T-cell (primary cell): ENCODE measurements at regions of chr5 and their contacts with region 1.

Region 1: DNA sequence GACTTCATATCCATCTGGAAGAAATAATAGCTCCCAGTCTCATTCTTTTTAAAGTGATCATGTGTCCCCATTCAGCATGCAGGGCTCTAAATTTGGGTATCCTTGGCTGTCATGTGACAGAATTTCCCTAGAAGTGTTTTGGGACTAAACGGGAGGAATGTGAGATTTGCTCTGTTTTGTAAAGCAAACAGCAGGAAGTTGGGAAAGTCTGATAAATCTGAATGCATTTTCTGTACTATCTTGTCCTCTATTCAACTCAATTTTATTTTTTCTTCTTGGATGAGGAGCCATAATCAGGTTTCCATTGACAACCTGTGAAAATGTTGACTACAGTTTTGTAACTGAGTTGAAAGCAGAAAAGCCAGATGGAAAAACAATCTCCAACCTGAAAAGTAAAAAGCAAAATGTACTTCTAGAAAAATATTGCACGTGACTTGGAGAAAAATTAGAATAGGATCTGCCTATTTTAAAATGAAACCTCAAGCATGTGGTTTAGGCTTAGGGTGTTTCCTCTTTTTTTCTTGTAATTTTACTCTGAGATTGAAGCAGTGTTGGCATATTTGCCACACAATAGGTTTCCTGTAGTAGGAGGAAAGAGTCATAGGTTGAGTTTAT is 76.2 kb upstream of the IL6ST start:
- DNase-seq: peak in 1 of 35 experiments; percentile 53
- ATAC-seq: peak; percentile 87 to 91 (median 90)
- H3K4me3 ChIP-seq: peak overlapping the region in 1 of 2 donors; percentile 15
- H3K4me3 Mint-ChIP-seq: peak overlapping the region; percentile 32 to 76 (median 56)
- H3K27ac ChIP-seq: peak overlapping the region; percentile 61
- H3K27ac Mint-ChIP-seq: peak overlapping the region; percentile 98
- H3K4me1 ChIP-seq: peaks cover 44 to 54% of the 10 kb centered on the region in 2 experiments
- H3K4me1 Mint-ChIP-seq: peaks cover 75 to 87% (median 79%) of the 10 kb centered on the region in 3 donors
- H3K27me3 ChIP-seq: no peaks in the 10 kb centered on the region
- H3K27me3 Mint-ChIP-seq: no peaks in the 10 kb centered on the region

Region 2: GRCh38 chr5:55800924-55801323 is 270.0 kb before region 1 on chr5:
- CTCF ChIA-PET with region 1: no interaction called
- POLR2A ChIA-PET with region 1: no interaction called
- DNase-seq: peak in 1 of 35 experiments; percentile 19
- ATAC-seq: no peak
- H3K4me3 ChIP-seq: no peak overlapping the region
- H3K4me3 Mint-ChIP-seq: no peak overlapping the region
- H3K27ac ChIP-seq: no peak overlapping the region
- H3K27ac Mint-ChIP-seq: no peak overlapping the region
- H3K4me1 ChIP-seq: no peaks in the 10 kb centered on the region
- H3K4me1 Mint-ChIP-seq: peaks cover 0 to 2% (median 0%) of the 10 kb centered on the region in 3 donors
- H3K27me3 ChIP-seq: no peaks in the 10 kb centered on the region
- H3K27me3 Mint-ChIP-seq: no peaks in the 10 kb centered on the region

Region 3: GRCh38 chr5:55959208-55959607 is 111.8 kb before region 1 on chr5:
- CTCF ChIA-PET with region 1: interaction called in 1 of 2 experiments, 13 read pairs
- POLR2A ChIA-PET with region 1: no interaction called
- DNase-seq: peak in 1 of 35 experiments; percentile 56
- ATAC-seq: peak in 1 of 4 experiments; percentile 80
- H3K4me3 ChIP-seq: no peak overlapping the region
- H3K4me3 Mint-ChIP-seq: no peak overlapping the region
- H3K27ac ChIP-seq: no peak overlapping the region
- H3K27ac Mint-ChIP-seq: peak overlapping the region; percentile 52 to 64
- H3K4me1 ChIP-seq: no peaks in the 10 kb centered on the region
- H3K4me1 Mint-ChIP-seq: peaks cover 14 to 23% (median 21%) of the 10 kb centered on the region in 3 donors
- H3K27me3 ChIP-seq: no peaks in the 10 kb centered on the region
- H3K27me3 Mint-ChIP-seq: no peaks in the 10 kb centered on the region

Region 4: GRCh38 chr5:56012281-56012963 is 58.5 kb before region 1 on chr5:
- CTCF ChIA-PET with region 1: no interaction called
- POLR2A ChIA-PET with region 1: interaction called in 1 of 2 experiments, 12 read pairs
- DNase-seq: peak in 33 of 35 experiments; percentile 9 to 68 (median 31)
- ATAC-seq: peak; percentile 96 to 98 (median 96)
- H3K4me3 ChIP-seq: no peak overlapping the region
- H3K4me3 Mint-ChIP-seq: peak overlapping the region; percentile 2 to 45 (median 34)
- H3K27ac ChIP-seq: peak overlapping the region; percentile 64
- H3K27ac Mint-ChIP-seq: peak overlapping the region; percentile 76 to 86
- H3K4me1 ChIP-seq: peaks cover 23 to 26% of the 10 kb centered on the region in 2 experiments
- H3K4me1 Mint-ChIP-seq: peaks cover 36 to 43% (median 39%) of the 10 kb centered on the region in 3 donors
- H3K27me3 ChIP-seq: no peaks in the 10 kb centered on the region
- H3K27me3 Mint-ChIP-seq: no peaks in the 10 kb centered on the region

Region 5: DNA sequence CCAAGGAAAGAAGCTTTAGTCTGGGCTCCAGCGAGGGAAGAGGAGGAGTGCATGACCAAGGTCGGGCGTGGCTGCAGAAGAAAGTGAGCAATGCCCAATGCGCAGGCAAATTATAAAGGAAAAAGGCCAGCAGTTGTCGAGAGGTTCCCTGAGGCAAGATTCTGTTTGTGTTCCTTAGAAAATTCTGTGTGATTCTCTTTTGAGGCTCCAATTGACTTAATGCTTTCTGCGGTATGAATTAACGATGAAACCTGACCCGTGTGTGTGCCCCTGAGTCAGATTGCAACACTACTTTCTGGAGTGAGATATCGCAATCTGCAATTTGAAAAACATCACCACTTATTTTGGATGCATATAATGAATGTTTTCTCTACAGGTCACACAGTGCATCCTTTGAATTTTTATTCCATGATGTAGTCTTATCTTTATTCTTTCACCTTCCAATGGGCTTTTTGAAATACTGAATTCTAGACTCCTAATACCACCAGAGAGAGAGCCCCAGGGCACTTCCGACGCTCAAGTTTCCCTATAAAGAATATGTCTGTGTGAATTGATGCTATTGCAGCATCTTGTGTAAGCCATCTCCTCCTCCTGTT is 41.7 kb after region 1 on chr5:
- CTCF ChIA-PET with region 1: no interaction called
- POLR2A ChIA-PET with region 1: no interaction called
- DNase-seq: no peak
- ATAC-seq: no peak
- H3K4me3 ChIP-seq: no peak overlapping the region
- H3K4me3 Mint-ChIP-seq: no peak overlapping the region
- H3K27ac ChIP-seq: no peak overlapping the region
- H3K27ac Mint-ChIP-seq: no peak overlapping the region
- H3K4me1 ChIP-seq: peaks cover 8 to 19% of the 10 kb centered on the region in 2 experiments
- H3K4me1 Mint-ChIP-seq: peaks cover 17 to 25% (median 22%) of the 10 kb centered on the region in 3 donors
- H3K27me3 ChIP-seq: no peaks in the 10 kb centered on the region
- H3K27me3 Mint-ChIP-seq: no peaks in the 10 kb centered on the region